PC-3 (cell line): ENCODE measurements at regions of chr20 and their contacts with region 1.

Region 1: GRCh38 chr20:20568604-20569205 is 143.7 kb downstream of the RALGAPA2 start:
- DNase-seq: peak; percentile 66
- ATAC-seq: peak; percentile 56
- H3K4me3 ChIP-seq: no peak overlapping the region
- H3K27ac ChIP-seq: no peak overlapping the region
- H3K4me1 ChIP-seq: no peaks in the 10 kb centered on the region
- H3K27me3 ChIP-seq: no peaks in the 10 kb centered on the region
- CTCF ChIP-seq: peak; percentile 92

Region 2: DNA sequence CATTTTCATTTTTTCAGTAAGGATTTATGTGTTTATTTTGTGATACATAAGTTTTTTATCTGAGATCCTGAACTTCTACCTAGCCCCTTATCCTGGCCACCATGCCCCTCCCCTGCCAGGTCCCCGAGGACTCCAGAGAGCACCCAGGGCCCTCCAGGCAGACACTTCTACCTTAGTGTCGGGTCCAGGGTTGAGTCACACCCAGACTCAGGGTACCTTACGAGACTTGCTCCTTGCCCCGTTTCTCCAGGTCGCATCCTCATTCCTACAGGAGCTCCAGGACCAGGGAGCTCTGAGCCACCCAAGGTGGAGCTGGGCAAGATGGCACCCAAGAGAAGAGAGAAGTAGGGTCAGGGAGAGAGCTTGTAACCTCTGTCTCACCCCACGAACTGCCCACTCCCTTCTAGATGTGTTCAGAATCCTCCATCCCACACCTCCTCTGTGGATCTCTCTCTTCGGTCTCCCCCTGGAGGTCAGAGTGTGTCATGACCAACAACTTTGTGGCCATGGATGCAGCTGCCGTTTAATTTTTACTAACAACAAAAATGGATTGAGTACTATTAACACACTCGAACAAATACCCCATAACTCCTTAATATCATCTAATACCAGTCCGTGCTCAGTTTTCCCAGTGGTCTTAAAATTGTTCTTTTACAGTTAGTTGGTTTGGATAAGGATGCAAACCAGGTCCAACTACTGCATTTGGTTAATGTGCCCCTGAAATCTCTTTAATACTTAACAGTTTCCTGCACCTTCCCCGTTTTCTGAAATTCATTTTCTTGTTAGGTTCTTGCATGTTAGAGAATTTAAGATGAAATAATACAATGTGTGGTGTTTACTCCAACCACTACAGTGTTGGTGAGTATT is 331.4 kb before region 1 on chr20:
- CTCF ChIA-PET with region 1: no interaction called
- POLR2A ChIA-PET with region 1: no interaction called
- intact Hi-C with region 1: loop called (anchors 1 kb)
- DNase-seq: peak; percentile 68
- ATAC-seq: peak; percentile 69
- H3K4me3 ChIP-seq: no peak overlapping the region
- H3K27ac ChIP-seq: no peak overlapping the region
- H3K4me1 ChIP-seq: no peaks in the 10 kb centered on the region
- H3K27me3 ChIP-seq: peaks cover 65% of the 10 kb centered on the region
- CTCF ChIP-seq: peak; percentile 88

Region 3: GRCh38 chr20:20360464-20360863 is 208.2 kb before region 1 on chr20:
- CTCF ChIA-PET with region 1: no interaction called
- POLR2A ChIA-PET with region 1: no interaction called
- intact Hi-C with region 1: loop called (anchors 1 kb)
- DNase-seq: peak; percentile 89
- ATAC-seq: peak; percentile 93
- H3K4me3 ChIP-seq: no peak overlapping the region
- H3K27ac ChIP-seq: no peak overlapping the region
- H3K4me1 ChIP-seq: peaks cover 5% of the 10 kb centered on the region; the same call in 1 of the 2 replicates
- H3K27me3 ChIP-seq: peaks cover 45% of the 10 kb centered on the region
- CTCF ChIP-seq: peak; percentile 95

Region 4: GRCh38 chr20:20407891-20408805 is 160.6 kb before region 1 on chr20:
- CTCF ChIA-PET with region 1: no interaction called
- POLR2A ChIA-PET with region 1: no interaction called
- intact Hi-C with region 1: loop called (anchors 1 kb)
- DNase-seq: peak; percentile 61
- ATAC-seq: peak; percentile 89
- H3K4me3 ChIP-seq: no peak overlapping the region
- H3K27ac ChIP-seq: no peak overlapping the region
- H3K4me1 ChIP-seq: no peaks in the 10 kb centered on the region
- H3K27me3 ChIP-seq: no peaks in the 10 kb centered on the region
- CTCF ChIP-seq: peak; percentile 79

Region 5: GRCh38 chr20:20463933-20464374 is 104.8 kb before region 1 on chr20:
- CTCF ChIA-PET with region 1: no interaction called
- POLR2A ChIA-PET with region 1: no interaction called
- intact Hi-C with region 1: loop called (anchors 2 kb)
- DNase-seq: no peak
- ATAC-seq: no peak
- H3K4me3 ChIP-seq: no peak overlapping the region
- H3K27ac ChIP-seq: no peak overlapping the region
- H3K4me1 ChIP-seq: peaks cover 10% of the 10 kb centered on the region
- H3K27me3 ChIP-seq: no peaks in the 10 kb centered on the region
- CTCF ChIP-seq: no peak

Region 6: GRCh38 chr20:20480689-20481088 is 88.0 kb before region 1 on chr20:
- CTCF ChIA-PET with region 1: no interaction called
- POLR2A ChIA-PET with region 1: no interaction called
- intact Hi-C with region 1: loop called (anchors 5 kb)
- DNase-seq: peak; percentile 81
- ATAC-seq: peak; percentile 65
- H3K4me3 ChIP-seq: no peak overlapping the region
- H3K27ac ChIP-seq: no peak overlapping the region; the same call in 1 of the 2 replicates
- H3K4me1 ChIP-seq: peaks cover 12% of the 10 kb centered on the region
- H3K27me3 ChIP-seq: no peaks in the 10 kb centered on the region
- CTCF ChIP-seq: no peak